OCI-LY7 (cell line): ENCODE measurements at regions of chr9 and their contacts with region 1.

Region 1: DNA sequence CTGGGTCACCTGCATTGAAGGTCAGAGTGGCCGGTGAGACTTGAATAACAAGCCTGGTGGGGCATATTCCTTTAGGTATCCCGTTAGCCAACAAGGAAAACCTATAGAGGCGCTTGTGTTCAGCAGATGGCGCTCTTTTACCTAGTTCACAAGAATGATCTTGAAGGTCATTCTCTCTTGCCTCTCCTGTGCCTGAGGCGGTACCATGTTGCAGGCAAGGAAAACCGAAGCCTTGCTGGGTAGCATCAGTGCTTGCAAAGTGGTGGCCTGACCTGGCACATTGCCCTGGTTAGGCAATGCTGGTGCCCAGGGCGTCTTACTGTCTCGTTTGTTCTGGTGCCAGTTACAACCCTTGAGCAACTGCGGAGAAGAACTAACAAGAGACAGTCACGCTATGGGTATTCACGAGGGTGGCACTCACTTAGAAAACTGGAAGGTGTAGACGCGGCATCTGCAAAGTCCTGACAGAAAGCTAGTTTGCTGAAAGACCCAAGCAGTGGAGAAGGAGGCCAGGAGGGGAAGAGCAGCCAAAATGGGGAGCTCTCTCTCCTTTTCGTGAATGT is 56.7 kb downstream of the AOPEP start:
- DNase-seq: peak; percentile 56
- H3K4me3 ChIP-seq: no peak overlapping the region
- H3K27ac ChIP-seq: no peak overlapping the region
- H3K4me1 ChIP-seq: no peaks in the 10 kb centered on the region
- CTCF ChIP-seq: peak; percentile 82

Region 2: DNA sequence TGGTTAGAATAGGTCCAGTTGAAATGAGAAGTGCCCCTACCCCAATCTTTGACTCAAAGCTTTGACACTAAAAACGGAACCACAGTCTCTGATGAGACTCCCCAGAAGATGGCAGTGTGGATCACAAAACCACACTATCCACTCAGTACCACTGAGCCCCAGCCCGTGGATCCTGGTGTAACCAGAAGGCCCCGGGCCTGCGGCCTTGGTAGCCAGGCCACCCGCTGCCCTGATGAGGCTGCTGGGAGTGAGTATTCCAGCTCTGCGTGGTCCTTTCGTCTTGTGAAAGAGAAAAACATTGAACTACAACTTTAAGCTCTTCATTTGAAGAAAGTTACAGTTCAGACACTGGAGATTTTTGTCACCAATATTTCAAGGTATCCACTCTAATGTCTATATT is 101.7 kb before region 1 on chr9:
- CTCF ChIA-PET with region 1: no interaction called
- POLR2A ChIA-PET with region 1: no interaction called
- intact Hi-C with region 1: loop called (anchors 2 kb)
- DNase-seq: peak; percentile 74
- H3K4me3 ChIP-seq: no peak overlapping the region
- H3K27ac ChIP-seq: no peak overlapping the region
- H3K4me1 ChIP-seq: no peaks in the 10 kb centered on the region
- CTCF ChIP-seq: peak; percentile 88

Region 3: GRCh38 chr9:94917840-94918753 is 134.9 kb after region 1 on chr9:
- CTCF ChIA-PET with region 1: no interaction called
- POLR2A ChIA-PET with region 1: no interaction called
- intact Hi-C with region 1: loop called (anchors 1 kb)
- DNase-seq: peak; percentile 28
- H3K4me3 ChIP-seq: no peak overlapping the region
- H3K27ac ChIP-seq: no peak overlapping the region
- H3K4me1 ChIP-seq: peaks cover 11% of the 10 kb centered on the region
- CTCF ChIP-seq: peak; percentile 48

Region 4: GRCh38 chr9:95127249-95128176 is 344.3 kb after region 1 on chr9:
- CTCF ChIA-PET with region 1: no interaction called
- POLR2A ChIA-PET with region 1: no interaction called
- intact Hi-C with region 1: loop called (anchors 2 kb)
- DNase-seq: peak; percentile 62
- H3K4me3 ChIP-seq: no peak overlapping the region
- H3K27ac ChIP-seq: no peak overlapping the region
- H3K4me1 ChIP-seq: no peaks in the 10 kb centered on the region
- CTCF ChIP-seq: peak; percentile 85

Region 5: DNA sequence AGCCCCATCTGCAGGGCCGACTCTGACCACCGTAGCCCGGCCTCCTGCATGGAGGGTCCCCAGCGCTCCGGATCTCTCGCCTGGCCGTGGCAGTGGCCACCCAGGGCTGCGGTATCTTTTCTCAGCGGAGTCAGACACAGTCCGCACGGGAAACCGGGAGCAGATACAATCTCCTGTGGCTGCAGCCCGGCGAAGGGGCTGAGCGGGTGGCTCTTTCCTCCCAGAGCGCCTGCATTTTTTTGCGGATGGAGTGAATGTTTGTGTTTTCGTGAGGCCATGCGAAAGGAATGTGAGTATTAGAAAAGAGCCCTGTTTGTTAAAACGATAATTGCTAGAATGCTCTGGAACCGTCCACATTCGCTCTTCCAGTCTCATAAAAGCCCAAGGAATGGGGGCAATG is 787.0 kb after region 1 on chr9:
- CTCF ChIA-PET with region 1: no interaction called
- POLR2A ChIA-PET with region 1: no interaction called
- intact Hi-C with region 1: loop called (anchors 10 kb)
- DNase-seq: no peak
- H3K4me3 ChIP-seq: no peak overlapping the region
- H3K27ac ChIP-seq: no peak overlapping the region
- H3K4me1 ChIP-seq: no peaks in the 10 kb centered on the region
- CTCF ChIP-seq: no peak